ENCODE measurements at regions of chr1 and their contacts with region 1.

Region 1: GRCh38 chr1:172398970-172399755 is 21.3 kb upstream of the C1orf105 start:
- DNase-seq: peak in 1 of 2 donors; percentile 87
- H3K4me3 ChIP-seq: peak overlapping the region; percentile 27 to 44
- H3K27ac ChIP-seq: peak overlapping the region; percentile 79 to 87
- H3K4me1 ChIP-seq: peaks cover 3 to 48% of the 10 kb centered on the region in 2 donors
- H3K27me3 ChIP-seq: no peaks in the 10 kb centered on the region
- CTCF ChIP-seq: peak; percentile 57 to 74 (median 63)

Region 2: GRCh38 chr1:172002725-172003345 is 396.3 kb before region 1 on chr1:
- intact Hi-C with region 1: no loop called
- DNase-seq: no peak
- H3K4me3 ChIP-seq: no peak overlapping the region
- H3K27ac ChIP-seq: no peak overlapping the region
- H3K4me1 ChIP-seq: no peaks in the 10 kb centered on the region
- H3K27me3 ChIP-seq: no peaks in the 10 kb centered on the region
- CTCF ChIP-seq: peak in 2 of 3 experiments; percentile 66 to 78

Region 3: GRCh38 chr1:172089768-172090510 is 309.2 kb before region 1 on chr1:
- intact Hi-C with region 1: loop called (anchors 1 kb)
- DNase-seq: peak in 1 of 2 donors; percentile 71
- H3K4me3 ChIP-seq: no peak overlapping the region
- H3K27ac ChIP-seq: no peak overlapping the region
- H3K4me1 ChIP-seq: no peaks in the 10 kb centered on the region
- H3K27me3 ChIP-seq: no peaks in the 10 kb centered on the region
- CTCF ChIP-seq: peak; percentile 49 to 76 (median 51)

Region 4: GRCh38 chr1:172144445-172145061 is 254.6 kb before region 1 on chr1:
- intact Hi-C with region 1: loop called (anchors 2 kb)
- DNase-seq: peak; percentile 69 to 94
- H3K4me3 ChIP-seq: peak overlapping the region; percentile 61 to 85
- H3K27ac ChIP-seq: peak overlapping the region; percentile 92 to 95
- H3K4me1 ChIP-seq: peaks cover 0 to 4% of the 10 kb centered on the region in 2 donors
- H3K27me3 ChIP-seq: no peaks in the 10 kb centered on the region
- CTCF ChIP-seq: no peak

Region 5: DNA sequence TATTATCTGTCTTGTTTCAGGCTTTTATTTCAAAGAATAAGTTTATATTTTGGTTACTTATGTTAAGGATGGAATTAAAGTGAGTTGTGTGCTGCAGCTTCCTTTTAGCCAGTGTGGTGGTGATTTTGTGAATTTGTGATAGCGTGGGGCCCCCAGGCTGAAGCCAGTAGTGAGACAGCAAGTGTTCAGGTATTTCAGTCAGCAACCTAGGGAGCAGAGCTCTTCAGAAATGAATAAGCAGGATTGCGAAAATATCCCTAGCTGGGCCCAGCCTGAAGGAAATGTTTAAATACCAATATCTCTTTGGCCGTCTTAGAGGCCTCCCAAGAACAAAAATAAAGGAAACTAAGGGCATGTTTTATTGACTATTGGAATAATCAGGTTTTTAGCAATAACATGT is 129.5 kb before region 1 on chr1:
- intact Hi-C with region 1: loop called (anchors 5 kb)
- DNase-seq: no peak
- H3K4me3 ChIP-seq: no peak overlapping the region
- H3K27ac ChIP-seq: peak overlapping the region in 1 of 2 donors; percentile 9
- H3K4me1 ChIP-seq: peaks cover 0 to 14% of the 10 kb centered on the region in 2 donors
- H3K27me3 ChIP-seq: no peaks in the 10 kb centered on the region
- CTCF ChIP-seq: no peak

Region 6: DNA sequence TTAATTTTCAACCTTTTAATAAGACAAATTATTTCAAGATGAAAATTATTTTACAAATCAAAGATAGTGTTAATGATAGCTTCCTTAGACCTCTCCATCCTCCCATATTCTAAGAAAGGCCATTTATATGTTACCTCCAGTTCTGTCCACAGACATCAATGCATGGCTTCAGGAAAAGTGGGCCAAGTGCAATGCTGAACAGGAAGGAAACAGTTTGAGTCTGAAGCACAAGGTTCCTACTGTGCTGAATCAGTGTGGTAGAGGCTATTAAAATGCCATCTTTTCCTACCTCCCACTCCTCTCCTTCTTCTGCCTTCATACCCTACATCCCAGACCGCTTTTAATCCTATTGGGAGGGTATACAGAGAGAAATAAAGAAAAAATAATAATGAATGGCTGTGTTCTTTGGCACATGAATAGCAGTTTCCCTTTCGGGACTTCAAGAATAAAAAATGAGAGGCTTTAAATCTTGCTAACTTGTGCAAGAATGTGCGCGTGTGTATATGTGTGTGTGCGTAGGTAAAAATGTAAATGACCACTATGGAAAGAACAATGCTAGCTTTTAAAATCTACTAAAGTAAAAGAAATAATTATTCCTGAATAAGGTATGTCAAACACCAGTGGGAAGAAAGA is 41.3 kb before region 1 on chr1:
- intact Hi-C with region 1: loop called (anchors 1 kb)
- DNase-seq: no peak
- H3K4me3 ChIP-seq: peak overlapping the region; percentile 10 to 52
- H3K27ac ChIP-seq: peak overlapping the region; percentile 86
- H3K4me1 ChIP-seq: peaks cover 3 to 14% of the 10 kb centered on the region in 2 donors
- H3K27me3 ChIP-seq: no peaks in the 10 kb centered on the region
- CTCF ChIP-seq: no peak

Region 7: DNA sequence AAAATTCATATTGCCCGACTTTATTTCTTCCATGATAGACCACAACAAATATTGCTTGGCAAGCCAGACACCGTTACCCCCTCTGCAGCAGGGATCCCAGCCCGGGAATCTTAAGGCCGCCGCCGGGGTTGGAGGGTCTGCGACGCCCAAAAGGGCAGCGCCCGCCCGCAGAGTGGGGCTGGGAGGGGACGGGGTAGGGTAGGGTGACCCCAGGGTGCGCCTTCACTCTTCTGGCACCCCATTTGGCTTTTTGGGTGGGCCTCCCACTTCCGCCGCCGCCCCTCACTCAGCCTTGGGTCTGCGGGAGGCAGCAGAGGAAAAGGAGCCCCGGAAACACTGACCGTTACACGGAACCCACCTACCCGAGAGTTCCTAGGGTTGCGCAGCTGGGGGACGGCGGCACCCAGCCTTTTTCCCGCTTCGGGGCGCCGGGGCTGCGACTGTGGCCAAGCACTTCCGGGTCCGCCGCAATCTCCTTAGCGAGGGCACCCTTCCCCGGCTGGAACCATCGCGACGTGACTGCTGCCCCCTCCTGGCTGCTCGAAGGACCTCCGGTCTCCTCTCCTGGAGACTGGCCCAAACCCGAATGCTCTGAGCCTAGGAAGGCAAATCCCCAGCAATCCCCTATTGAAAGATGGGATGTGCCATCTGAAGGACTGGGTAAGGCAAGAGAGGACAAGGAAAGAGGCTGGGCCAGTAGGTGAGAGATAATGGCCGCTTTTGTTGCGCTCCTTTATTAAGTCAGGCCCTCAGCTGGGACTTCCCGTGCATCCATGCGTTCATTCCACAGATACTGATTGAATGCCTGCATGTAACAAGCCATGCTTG is 44.7 kb after region 1 on chr1 and contains the start of gene PIGC:
- intact Hi-C with region 1: loop called (anchors 2 kb)
- DNase-seq: peak; percentile 24 to 94
- H3K4me3 ChIP-seq: peak within 1 kb of the TSS; percentile 84 to 98
- H3K27ac ChIP-seq: peak within 1 kb of the TSS; percentile 76 to 79
- H3K4me1 ChIP-seq: peaks cover 0 to 10% of the 10 kb centered on the region in 2 donors
- H3K27me3 ChIP-seq: no peaks in the 10 kb centered on the region
- CTCF ChIP-seq: peak; percentile 75 to 84 (median 82)
- total RNA-seq, gene PIGC: 20.0 TPM

Measured in ascending aorta (tissue), 2 donors.